ENCODE measurements at regions of chr20 and their contacts with region 1.

Region 1: GRCh38 chr20:17504898-17505635 is 26.1 kb downstream of the BFSP1 start:
- DNase-seq: peak; percentile 18
- H3K4me3 ChIP-seq: peak overlapping the region; percentile 30 to 34
- H3K27ac ChIP-seq: peak overlapping the region in 1 of 2 donors; percentile 15
- H3K4me1 ChIP-seq: no peaks in the 10 kb centered on the region
- H3K27me3 ChIP-seq: no peaks in the 10 kb centered on the region
- CTCF ChIP-seq: peak; percentile 60 to 77 (median 68)
- POLR2A ChIP-seq: no peak

Region 2: DNA sequence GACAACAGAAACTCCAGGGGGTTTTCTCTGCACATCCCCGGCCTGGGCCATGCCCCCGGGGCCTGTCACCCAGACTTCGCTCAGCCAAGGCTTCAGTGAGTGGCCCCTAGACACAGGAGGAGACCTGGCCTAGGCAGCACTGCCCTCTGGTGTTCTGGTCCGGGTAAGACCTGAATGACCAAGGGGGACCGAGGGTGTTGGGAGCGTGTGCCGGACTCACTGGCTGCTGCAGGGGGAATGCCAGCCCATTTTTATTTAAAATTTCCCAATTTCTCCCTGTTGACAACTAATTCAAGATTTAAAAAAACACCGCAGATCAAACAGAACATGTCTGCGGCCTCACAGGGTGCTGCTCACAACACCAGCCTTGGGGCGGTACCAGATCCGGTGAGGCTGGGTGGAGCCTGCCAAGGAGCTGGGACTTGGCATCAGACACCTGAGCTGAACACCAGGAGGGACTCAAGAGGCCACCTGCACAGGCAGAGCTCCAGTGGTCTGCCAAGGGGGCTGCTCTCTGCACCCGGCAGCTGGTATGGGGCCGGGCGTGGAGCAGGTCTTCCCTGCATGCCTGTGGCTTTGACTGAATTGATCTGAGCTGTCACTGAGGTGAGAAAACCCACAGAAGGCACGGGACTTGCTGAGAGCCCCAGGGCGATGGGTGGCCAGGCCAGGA is 112.6 kb after region 1 on chr20:
- intact Hi-C with region 1: loop called (anchors 1 kb)
- DNase-seq: peak; percentile 74
- H3K4me3 ChIP-seq: no peak overlapping the region
- H3K27ac ChIP-seq: peak overlapping the region in 1 of 2 donors; percentile 18
- H3K4me1 ChIP-seq: peaks cover 3% of the 10 kb centered on the region
- H3K27me3 ChIP-seq: no peaks in the 10 kb centered on the region
- CTCF ChIP-seq: peak; percentile 78 to 96 (median 86)
- POLR2A ChIP-seq: no peak

Region 3: DNA sequence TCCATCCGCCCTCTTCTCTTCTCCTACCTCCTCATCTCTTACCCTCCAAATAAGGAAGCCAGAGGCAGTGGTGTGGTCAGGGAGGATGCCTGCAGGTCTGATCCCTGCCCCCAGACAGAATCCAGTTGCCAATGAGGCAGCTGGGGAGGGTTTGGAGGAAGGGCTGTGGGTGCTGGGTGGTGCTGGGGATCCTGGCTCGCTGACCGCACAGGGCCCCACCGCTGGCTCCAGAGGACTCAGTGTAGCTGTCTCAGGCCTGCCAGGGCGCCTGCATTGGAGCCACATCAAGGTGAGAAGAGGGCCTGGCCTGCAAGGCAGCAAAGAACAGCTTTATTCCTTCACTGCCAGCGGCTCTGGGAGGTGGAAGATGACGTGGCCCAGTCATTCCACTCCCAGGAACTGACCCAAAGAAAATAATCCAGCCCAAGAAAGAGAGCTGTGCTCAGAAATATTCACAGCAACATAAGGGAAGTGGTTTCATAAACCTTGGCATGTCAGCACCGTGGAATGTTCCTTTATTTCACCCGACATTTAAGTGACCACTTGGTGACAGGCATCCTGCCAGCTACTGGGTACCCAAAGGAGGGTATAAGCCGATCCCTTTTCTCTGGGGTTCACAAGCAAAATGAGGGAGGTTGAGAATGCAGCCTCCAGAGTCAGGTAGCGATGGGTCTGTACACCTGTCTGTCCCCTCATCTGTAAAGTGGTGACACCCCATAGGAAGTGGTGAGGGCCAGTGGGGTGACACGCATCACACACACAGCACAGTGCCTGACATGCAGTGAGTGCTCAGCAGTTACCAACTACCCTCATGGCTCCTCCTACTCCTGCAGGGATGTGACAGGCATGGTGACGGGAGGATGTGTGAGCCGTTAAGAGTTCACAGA is 338.4 kb after region 1 on chr20:
- intact Hi-C with region 1: no loop called
- DNase-seq: no peak
- H3K4me3 ChIP-seq: no peak overlapping the region
- H3K27ac ChIP-seq: peak overlapping the region; percentile 61 to 75
- H3K4me1 ChIP-seq: no peaks in the 10 kb centered on the region
- H3K27me3 ChIP-seq: no peaks in the 10 kb centered on the region
- CTCF ChIP-seq: no peak
- POLR2A ChIP-seq: no peak

Region 4: DNA sequence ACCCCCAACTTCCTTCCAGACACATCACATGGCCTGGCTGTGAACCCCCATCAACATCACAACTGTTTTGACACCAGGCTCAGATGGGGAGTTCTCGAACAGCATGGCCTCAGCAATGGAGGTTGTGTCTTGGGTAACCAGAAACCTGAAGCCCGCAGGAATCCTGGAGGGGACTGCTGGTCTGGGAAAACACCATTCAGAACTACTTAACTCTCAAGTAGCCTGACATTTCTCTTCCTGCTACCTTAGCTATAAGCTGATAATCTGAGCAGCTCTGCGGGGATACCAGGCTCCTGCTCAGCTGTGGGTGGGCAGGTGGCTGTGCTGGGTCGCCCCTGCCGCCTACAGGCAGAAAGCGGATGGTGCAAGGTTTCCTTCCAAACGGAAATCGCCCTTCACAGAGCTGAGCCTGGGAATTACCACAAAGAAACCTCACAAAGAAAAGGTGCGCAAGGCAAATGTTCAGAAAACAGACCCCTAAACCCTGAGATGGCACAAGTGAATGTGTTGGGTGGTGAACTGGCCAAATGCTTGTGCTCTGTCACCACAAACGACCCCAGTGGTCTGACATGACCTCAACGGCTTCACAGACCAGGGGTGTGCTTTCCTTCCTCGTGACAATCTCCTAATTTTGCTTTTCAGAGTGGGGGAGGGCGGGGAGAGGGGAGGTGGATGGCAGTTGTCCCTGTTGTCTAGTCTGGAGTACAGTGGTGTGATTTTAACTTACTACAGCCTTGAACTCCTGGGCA is 434.0 kb after region 1 on chr20:
- intact Hi-C with region 1: loop called (anchors 5 kb)
- DNase-seq: peak; percentile 55
- H3K4me3 ChIP-seq: no peak overlapping the region
- H3K27ac ChIP-seq: no peak overlapping the region
- H3K4me1 ChIP-seq: no peaks in the 10 kb centered on the region
- H3K27me3 ChIP-seq: no peaks in the 10 kb centered on the region
- CTCF ChIP-seq: peak; percentile 49 to 83 (median 74)
- POLR2A ChIP-seq: no peak